ENCODE measurements at regions of chr11 and their contacts with region 1.

Region 1: DNA sequence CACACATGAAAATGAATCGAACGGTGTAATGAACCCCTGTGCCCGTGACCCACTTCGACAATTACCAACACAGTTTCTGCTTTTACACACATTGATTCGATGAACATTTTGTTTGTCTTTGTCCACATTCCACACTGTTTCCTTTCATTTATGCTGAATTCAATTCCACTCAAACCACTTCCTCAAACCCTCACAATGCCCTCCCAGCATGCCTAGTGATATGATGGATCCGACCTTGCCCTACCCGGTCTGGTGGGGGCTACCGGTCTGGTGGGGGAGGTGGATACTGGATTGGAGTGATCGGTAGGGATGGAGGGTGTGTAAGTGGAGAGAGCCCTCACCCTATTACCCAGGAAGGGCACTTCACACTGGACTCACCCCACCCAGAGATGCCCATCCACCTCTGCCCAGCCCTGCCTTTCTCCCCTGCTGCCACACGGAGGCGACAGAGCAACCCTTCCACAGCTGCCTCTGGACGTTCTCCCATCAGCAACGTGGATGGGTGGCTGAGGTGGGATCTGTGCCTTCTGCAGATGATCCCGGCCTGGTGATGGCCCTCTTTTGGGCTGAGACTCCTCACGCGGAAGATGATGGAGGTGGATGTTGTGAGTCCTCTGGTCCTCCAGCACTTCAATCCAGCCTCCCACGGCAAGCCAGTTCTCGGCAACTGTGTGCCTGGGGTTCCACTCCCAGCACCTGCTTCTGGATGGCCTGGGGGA is 33.0 kb upstream of the P2RY2 start:
- DNase-seq: peak; percentile 77 to 81
- H3K4me3 ChIP-seq: no peak overlapping the region
- H3K27ac ChIP-seq: peak overlapping the region in 2 of 3 donors; percentile 19 to 27
- H3K4me1 ChIP-seq: peaks cover 12 to 18% of the 10 kb centered on the region in 2 donors
- H3K27me3 ChIP-seq: no peaks in the 10 kb centered on the region
- CTCF ChIP-seq: peak; percentile 78 to 97 (median 92)
- POLR2A ChIP-seq: no peak

Region 2: DNA sequence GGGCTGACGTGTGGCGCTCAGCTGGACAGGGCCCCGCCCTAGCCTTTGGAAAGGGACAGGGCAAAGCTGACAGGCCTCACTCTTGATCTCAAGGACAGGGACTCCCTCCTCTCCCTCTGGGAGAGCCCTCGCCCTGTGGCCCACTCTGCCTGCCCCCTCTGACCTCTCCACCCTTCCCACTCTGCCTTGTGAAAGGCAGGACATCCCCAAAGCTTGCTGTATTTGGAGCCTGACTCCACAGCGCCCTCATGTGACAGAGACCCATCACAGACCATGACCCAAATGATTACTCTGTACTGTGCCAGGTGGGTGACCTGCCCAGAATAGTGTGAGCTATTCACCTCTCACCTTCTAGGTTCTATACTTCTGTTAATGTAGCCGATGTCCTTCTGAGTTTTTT is 51.7 kb after region 1 on chr11:
- intact Hi-C with region 1: loop called (anchors 5 kb)
- DNase-seq: peak; percentile 46 to 57
- H3K4me3 ChIP-seq: no peak overlapping the region
- H3K27ac ChIP-seq: no peak overlapping the region
- H3K4me1 ChIP-seq: peaks cover 5 to 16% of the 10 kb centered on the region in 2 donors
- H3K27me3 ChIP-seq: no peaks in the 10 kb centered on the region
- CTCF ChIP-seq: peak in 5 of 6 experiments; percentile 9 to 65 (median 51)
- POLR2A ChIP-seq: no peak

Region 3: GRCh38 chr11:73350908-73351636 is 166.0 kb after region 1 on chr11:
- intact Hi-C with region 1: no loop called
- DNase-seq: peak; percentile 44 to 51
- H3K4me3 ChIP-seq: no peak overlapping the region
- H3K27ac ChIP-seq: no peak overlapping the region
- H3K4me1 ChIP-seq: peaks cover 11 to 21% of the 10 kb centered on the region in 2 donors
- H3K27me3 ChIP-seq: no peaks in the 10 kb centered on the region
- CTCF ChIP-seq: peak; percentile 76 to 96 (median 90)
- POLR2A ChIP-seq: no peak

Measured in thyroid gland (tissue), 4 donors.